CD4-positive, alpha-beta T cell (primary cell): ENCODE measurements at regions of chr7 and their contacts with region 1.

Region 1: DNA sequence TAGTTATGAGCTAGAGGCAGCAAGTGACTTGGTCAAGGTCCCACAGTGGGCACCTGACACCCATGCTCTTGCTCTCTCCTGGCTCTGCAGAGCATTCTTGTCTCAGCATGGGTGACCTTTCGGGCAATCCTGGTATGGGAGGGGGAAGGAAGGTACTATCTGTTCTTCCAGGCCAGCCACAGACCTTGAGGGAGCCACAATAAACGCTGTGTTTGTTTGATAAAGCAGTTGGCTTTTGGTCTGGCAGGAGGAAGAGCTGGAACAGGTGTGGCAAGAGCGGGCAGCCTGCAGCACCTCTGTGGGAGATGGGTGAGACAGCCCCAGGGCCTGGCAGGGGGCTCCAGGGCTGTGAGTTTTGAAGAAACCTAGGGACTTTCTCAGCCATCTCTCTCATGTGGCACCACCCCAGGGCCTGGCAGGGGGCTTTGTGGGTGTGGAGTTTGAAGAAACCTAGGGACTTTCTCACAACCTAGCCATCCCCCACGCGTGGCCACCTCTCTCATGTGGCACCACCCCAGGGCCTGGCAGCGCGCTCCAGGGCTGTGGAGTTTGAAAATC is 11.4 kb downstream of the CLDN3 start:
- DNase-seq: no peak
- ATAC-seq: no peak
- H3K4me3 ChIP-seq: no peak overlapping the region
- H3K4me3 Mint-ChIP-seq: no peak overlapping the region
- H3K27ac ChIP-seq: no peak overlapping the region
- H3K27ac Mint-ChIP-seq: no peak overlapping the region
- H3K4me1 ChIP-seq: no peaks in the 10 kb centered on the region
- H3K4me1 Mint-ChIP-seq: no peaks in the 10 kb centered on the region
- H3K27me3 ChIP-seq: no peaks in the 10 kb centered on the region
- H3K27me3 Mint-ChIP-seq: no peaks in the 10 kb centered on the region
- CTCF ChIP-seq: no peak

Region 2: GRCh38 chr7:73351447-73352167 is 407.1 kb before region 1 on chr7:
- CTCF ChIA-PET with region 1: no interaction called
- POLR2A ChIA-PET with region 1: no interaction called
- intact Hi-C with region 1: loop called in 1 of 2 experiments (anchors 5 kb)
- DNase-seq: no peak
- ATAC-seq: no peak
- H3K4me3 ChIP-seq: no peak overlapping the region
- H3K4me3 Mint-ChIP-seq: no peak overlapping the region
- H3K27ac ChIP-seq: no peak overlapping the region
- H3K27ac Mint-ChIP-seq: no peak overlapping the region
- H3K4me1 ChIP-seq: no peaks in the 10 kb centered on the region
- H3K4me1 Mint-ChIP-seq: no peaks in the 10 kb centered on the region
- H3K27me3 ChIP-seq: no peaks in the 10 kb centered on the region
- H3K27me3 Mint-ChIP-seq: no peaks in the 10 kb centered on the region
- CTCF ChIP-seq: no peak